Dendritic cell treated with granulocyte-macrophage colony-stimulating factor and Interleukin-4, amounts not matched to agents 40 ng/mL and 50 ng/mL, for 4 days (primary cell): ENCODE measurements at regions of chr12 and their contacts with region 1.

Region 1: DNA sequence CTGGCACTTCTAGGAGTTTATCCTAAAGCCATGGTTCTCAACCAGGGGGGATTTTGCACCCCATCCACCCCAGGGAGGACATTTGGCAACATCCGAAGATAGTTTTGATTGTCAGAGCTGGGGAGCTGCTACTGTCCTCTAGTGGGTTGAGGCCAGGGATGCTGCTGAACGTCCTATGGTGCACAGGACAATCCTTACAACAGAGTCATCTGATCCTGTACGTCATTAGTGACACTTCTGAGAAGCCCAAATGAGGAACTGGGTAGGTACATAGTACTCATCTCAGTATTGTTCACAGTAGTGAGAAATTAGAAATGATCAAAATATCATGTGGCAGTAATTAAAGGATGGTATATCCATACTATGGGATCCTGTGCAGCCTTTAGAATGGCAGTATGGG is 185.1 kb downstream of the CHST11 start:
- H3K4me3 Mint-ChIP-seq: no peak overlapping the region
- H3K27ac Mint-ChIP-seq: peak overlapping the region; percentile 93
- H3K4me1 Mint-ChIP-seq: peaks cover 85% of the 10 kb centered on the region
- H3K27me3 Mint-ChIP-seq: no peaks in the 10 kb centered on the region

Region 2: DNA sequence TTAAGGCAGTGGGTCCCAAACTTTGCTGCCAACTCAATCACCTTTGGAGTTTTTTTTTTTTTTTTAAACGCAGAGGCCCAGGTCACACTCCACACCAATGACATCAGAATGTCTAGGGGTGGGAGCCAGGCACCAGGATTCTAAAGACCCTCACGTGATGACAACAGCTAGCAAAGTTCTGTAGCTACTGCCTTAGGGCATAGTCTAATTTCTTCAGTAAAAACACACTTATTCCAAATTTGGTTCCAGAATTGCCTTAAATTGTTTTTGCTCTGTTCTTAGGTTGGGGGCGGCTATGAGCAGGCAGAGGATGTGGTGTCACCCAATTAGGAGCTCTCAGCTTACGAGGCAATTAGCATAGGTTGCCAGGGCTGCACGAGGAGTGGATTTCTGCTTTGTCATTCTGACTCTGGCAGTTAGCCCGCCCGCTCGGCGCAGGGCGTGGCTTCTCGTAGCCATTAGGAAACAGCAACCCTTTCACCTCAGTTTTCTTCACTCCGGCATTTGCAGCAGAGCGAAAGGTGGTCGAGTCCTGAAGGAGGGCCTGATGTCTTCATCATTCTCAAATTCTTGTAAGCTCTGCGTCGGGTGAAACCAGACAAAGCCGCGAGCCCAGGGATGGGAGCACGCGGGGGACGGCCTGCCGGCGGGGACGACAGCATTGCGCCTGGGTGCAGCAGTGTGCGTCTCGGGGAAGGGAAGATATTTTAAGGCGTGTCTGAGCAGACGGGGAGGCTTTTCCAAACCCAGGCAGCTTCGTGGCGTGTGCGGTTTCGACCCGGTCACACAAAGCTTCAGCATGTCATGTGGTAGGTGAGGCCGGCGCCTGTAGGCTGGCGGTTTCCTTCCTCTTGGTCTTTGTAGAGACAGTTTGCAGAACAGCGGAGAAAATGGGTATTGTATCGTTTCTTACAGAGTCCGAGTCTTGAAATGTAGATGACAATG is 355.1 kb before region 1 on chr12:
- intact Hi-C with region 1: loop called (anchors 5 kb)
- H3K4me3 Mint-ChIP-seq: peak overlapping the region; percentile 96
- H3K27ac Mint-ChIP-seq: peak overlapping the region; percentile 95
- H3K4me1 Mint-ChIP-seq: peaks cover 21% of the 10 kb centered on the region
- H3K27me3 Mint-ChIP-seq: no peaks in the 10 kb centered on the region

Region 3: DNA sequence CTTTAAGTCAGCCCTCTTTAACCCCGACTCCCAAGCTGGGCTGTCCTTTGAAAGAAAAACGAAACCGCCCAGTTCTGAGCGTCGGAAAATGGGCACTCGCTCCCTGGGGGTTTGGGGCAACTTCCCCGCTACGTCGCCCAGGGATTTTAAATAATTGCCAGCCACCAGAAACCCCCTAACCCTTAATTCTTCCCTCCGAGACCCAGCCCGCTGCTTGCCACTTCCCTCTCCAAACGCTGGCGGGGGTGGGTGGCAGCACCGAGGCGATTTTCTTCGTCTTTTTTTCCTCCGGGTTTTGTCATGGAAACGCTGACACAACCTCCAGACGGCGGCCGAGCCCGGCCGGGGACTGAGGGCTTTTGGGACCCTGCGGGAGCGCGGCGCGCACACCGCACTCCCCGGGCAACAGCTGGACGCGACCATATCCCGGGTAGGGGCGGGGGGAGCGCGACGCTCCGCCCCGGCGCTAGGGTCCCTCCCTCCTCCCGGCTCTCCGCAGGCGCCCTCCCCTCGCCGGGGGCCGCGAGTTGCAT is 185.4 kb before region 1 on chr12 and contains the start of gene CHST11:
- intact Hi-C with region 1: loop called (anchors 2 kb)
- H3K4me3 Mint-ChIP-seq: peak within 1 kb of the TSS; percentile 100
- H3K27ac Mint-ChIP-seq: peak within 1 kb of the TSS; percentile 91
- H3K4me1 Mint-ChIP-seq: peaks cover 36% of the 10 kb centered on the region
- H3K27me3 Mint-ChIP-seq: peaks cover 6% of the 10 kb centered on the region

Region 4: DNA sequence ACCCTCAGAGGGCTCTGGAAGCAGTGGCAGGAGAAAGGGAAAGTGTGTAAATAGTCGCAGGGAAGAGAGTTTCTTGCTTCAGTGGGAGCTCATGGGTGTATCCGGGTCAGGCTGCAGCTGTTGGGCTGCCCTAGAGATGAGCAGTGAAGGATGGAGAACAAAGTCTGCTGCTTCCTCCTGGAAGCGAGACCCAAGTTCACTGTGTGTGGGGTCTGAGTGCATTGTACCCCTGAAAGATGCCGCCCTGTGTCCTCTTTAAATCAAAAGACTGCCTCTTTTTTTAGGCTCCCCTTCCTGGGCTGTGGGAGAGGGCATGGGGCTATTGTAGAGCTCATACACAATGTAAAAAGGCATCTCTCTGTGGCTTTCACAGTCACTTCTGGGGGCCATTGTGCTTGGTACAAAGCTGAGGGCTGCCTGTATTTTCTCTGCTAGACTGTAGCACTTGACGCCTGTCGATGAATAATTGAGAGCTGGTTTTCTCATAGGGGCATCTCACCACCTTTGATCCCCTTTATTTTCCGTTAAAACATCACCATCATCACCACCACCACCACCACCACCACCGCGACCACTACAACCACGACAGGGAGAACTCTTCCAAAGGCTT is 168.4 kb before region 1 on chr12:
- intact Hi-C with region 1: no loop called
- H3K4me3 Mint-ChIP-seq: no peak overlapping the region
- H3K27ac Mint-ChIP-seq: peak overlapping the region; percentile 65
- H3K4me1 Mint-ChIP-seq: peaks cover 83% of the 10 kb centered on the region
- H3K27me3 Mint-ChIP-seq: no peaks in the 10 kb centered on the region

Region 5: GRCh38 chr12:104604070-104604994 is 37.5 kb before region 1 on chr12:
- intact Hi-C with region 1: loop called (anchors 5 kb)
- H3K4me3 Mint-ChIP-seq: peak overlapping the region; percentile 28
- H3K27ac Mint-ChIP-seq: peak overlapping the region; percentile 94
- H3K4me1 Mint-ChIP-seq: peaks cover 88% of the 10 kb centered on the region
- H3K27me3 Mint-ChIP-seq: no peaks in the 10 kb centered on the region

Region 6: GRCh38 chr12:104671407-104672098 is 29.7 kb after region 1 on chr12:
- intact Hi-C with region 1: loop called (anchors 2 kb)
- H3K4me3 Mint-ChIP-seq: peak overlapping the region; percentile 51
- H3K27ac Mint-ChIP-seq: peak overlapping the region; percentile 87
- H3K4me1 Mint-ChIP-seq: peaks cover 79% of the 10 kb centered on the region
- H3K27me3 Mint-ChIP-seq: no peaks in the 10 kb centered on the region

Region 7: DNA sequence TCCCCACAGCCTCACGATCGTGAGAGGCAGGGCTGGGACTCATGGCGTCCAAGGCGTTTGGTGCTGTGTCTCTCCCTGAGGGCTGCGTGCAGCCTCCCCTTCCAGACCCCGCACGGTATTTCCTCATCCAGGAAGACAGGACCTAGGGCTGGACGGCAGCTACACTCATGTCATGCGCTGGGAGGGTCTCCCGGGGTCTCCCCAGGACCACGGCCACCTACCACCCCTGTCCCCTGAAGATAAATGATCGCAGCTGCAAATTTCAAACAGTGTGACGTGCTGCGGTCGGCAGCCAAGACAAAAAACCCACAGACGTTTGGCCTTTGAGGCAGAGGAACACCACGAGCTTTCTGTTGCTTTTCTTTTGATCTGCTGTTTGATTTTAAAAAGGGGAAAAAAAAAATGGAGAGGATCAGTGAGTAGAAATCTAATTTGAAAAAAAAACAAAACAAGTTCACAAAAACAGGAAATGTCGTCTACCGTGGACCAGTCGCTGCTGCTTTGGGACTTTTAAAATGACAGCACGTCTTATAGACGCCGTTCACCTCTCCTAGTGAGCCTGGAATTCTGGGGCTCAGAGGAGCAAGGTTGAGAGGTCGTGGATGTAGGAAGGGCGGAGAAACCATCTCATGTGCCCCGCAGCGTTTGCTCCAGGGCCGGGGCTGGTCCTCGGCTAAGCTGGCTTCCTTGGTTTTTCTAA is 78.6 kb after region 1 on chr12:
- intact Hi-C with region 1: no loop called
- H3K4me3 Mint-ChIP-seq: peak overlapping the region; percentile 72
- H3K27ac Mint-ChIP-seq: peak overlapping the region; percentile 94
- H3K4me1 Mint-ChIP-seq: peaks cover 62% of the 10 kb centered on the region
- H3K27me3 Mint-ChIP-seq: no peaks in the 10 kb centered on the region

Region 8: GRCh38 chr12:104750061-104750460 is 108.2 kb after region 1 on chr12:
- intact Hi-C with region 1: loop called (anchors 2 kb)
- H3K4me3 Mint-ChIP-seq: peak overlapping the region; percentile 53
- H3K27ac Mint-ChIP-seq: peak overlapping the region; percentile 93
- H3K4me1 Mint-ChIP-seq: peaks cover 85% of the 10 kb centered on the region
- H3K27me3 Mint-ChIP-seq: no peaks in the 10 kb centered on the region